ENCODE measurements at regions of chr15 and their contacts with region 1.

Region 1: GRCh38 chr15:40452296-40453090 is 11.7 kb downstream of the BAHD1 start:
- DNase-seq: peak; percentile 39
- H3K4me3 Mint-ChIP-seq: no peak overlapping the region
- H3K27ac Mint-ChIP-seq: peak overlapping the region; percentile 33
- H3K4me1 Mint-ChIP-seq: peaks cover 83% of the 10 kb centered on the region
- H3K27me3 Mint-ChIP-seq: no peaks in the 10 kb centered on the region

Region 2: DNA sequence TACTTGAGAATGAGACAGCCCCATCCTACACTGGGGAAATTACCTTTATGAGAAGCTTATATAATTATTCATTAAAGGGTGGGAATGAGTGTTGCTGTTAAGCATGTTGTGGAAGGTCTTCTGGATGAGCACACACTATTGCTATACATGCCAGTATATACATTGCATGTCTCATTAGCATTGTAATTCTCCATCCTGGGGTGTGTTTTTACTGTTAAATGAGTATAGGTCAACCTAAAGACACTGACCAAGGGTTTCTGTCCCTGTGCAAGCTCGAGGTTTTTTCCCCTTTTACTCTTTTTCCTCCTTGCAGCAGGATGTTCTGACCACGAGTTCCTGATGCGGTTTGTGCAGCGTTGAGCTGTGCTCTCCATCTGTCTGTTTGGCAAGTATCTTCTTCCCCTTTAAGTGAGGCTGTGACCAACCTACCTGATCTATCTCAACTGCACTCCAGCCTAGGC is 54.0 kb before region 1 on chr15:
- CTCF ChIA-PET with region 1: no interaction called
- intact Hi-C with region 1: no loop called
- DNase-seq: peak; percentile 51
- H3K4me3 Mint-ChIP-seq: no peak overlapping the region
- H3K27ac Mint-ChIP-seq: peak overlapping the region; percentile 3
- H3K4me1 Mint-ChIP-seq: peaks cover 21% of the 10 kb centered on the region
- H3K27me3 Mint-ChIP-seq: no peaks in the 10 kb centered on the region

Region 3: DNA sequence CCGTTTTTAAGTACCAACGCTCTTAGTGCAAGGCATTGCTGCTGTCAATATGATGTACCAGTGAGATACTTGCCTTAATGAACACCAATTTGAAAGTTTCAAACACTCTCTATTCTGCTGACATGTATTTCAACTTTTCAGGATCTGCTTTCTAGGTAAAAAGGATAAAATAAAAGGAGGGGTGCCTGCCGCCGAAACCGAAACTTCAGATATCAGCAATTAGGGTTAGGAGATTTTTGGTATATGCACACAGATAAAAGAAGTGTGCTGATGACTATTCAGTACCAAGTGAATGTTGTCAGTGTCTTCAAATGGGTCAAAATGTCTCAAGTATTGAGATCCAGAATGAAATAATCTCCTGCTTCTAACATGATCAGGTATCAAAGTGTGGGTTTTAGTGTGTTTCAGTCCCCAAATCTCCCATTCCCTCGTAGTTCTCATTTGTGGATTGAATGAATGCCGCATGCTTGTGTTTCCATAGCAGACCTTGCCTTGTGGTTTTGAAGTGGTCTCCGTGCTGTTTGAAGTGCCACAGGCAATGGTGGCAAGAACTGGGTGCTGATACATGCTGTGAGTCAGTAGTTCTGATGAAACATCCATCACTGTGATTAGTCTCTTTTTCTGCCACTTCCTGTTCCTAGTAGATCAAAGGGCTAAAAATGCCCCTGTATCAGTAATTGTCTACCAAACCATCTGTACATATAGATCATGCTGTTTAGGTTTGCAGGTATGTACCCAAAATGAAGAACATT is 40.8 kb after region 1 on chr15:
- CTCF ChIA-PET with region 1: interaction called, 3 read pairs
- intact Hi-C with region 1: loop called (anchors 2 kb)
- DNase-seq: peak; percentile 83
- H3K4me3 Mint-ChIP-seq: peak overlapping the region; percentile 4
- H3K27ac Mint-ChIP-seq: peak overlapping the region; percentile 14
- H3K4me1 Mint-ChIP-seq: peaks cover 28% of the 10 kb centered on the region
- H3K27me3 Mint-ChIP-seq: peaks cover under 1% of the 10 kb centered on the region